GM13976 (cell line): ENCODE measurements at regions of chr7 and their contacts with region 1.

Region 1: GRCh38 chr7:28389504-28390395 is 22.6 kb upstream of the CREB5 start:
- DNase-seq: peak; percentile 21
- CTCF ChIP-seq: peak; percentile 19

Region 2: DNA sequence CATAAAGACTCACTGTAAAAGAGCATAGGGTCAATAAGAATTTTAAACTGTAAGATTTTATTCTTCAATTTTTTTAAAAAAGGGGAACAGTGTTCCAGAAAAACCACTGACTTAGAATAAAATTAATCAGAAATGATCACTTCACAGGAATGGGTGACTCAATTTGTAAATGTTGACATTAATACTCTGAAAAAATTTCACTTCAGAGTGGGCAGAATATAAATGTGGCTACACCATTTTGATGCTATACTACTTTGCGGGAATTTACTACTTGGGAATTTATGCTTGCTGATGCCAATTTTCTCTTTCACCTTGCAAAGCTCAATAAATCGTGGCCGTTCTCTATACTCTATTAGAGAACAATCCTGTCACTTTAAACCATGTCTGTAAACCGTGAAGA is 854.0 kb before region 1 on chr7:
- in situ Hi-C with region 1: no loop called
- DNase-seq: no peak
- CTCF ChIP-seq: no peak

Region 3: GRCh38 chr7:28626624-28627262 is 237.0 kb after region 1 on chr7:
- in situ Hi-C with region 1: loop called (anchors 10 kb)
- DNase-seq: peak; percentile 13
- CTCF ChIP-seq: peak; percentile 29

Region 4: DNA sequence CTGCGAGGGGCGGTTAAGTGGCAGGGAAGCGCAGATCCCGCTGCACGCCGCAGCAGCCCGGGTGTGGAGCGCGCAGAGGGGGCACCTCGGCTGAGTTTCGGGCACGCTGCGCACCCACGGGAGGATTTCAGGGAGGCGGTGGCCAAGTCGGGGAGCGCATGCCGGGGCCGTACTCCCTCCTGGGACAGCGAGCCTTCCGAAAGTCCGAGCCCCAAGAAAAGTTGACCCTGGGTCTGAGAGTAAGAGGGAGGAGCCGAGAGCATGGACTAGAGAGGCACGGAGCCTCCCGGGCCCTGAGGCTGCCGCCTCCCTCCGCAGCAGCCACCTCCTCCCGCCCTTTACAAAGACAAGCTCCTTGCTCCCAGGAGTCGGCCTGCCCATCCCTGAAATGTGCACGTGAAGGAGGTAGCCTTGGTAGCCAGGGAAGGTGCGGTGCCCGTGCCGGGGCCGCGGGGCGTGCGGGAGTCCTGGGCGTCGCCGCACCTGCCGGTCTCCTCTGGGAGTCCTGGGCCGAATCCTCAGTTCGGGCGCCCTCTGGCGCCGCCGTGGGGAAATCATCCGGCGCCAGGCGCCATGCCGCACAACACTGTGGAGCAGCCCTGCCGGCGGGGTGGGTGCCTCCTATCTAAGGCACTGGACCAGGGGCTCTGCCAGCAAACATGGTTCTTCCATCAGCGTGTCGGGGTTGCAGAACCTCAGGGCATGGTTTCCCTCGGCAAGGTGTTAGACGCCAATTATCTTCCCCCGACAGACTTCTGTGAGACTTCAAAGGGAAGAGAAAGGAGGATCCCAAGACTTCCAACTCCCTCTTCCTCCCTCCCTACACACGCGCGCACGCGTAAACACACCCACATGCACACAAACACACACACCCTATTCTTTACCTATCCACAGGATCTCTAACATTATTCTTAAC is 464.3 kb after region 1 on chr7:
- in situ Hi-C with region 1: loop called (anchors 10 kb)
- DNase-seq: peak; percentile 95
- CTCF ChIP-seq: peak; percentile 89

Region 5: DNA sequence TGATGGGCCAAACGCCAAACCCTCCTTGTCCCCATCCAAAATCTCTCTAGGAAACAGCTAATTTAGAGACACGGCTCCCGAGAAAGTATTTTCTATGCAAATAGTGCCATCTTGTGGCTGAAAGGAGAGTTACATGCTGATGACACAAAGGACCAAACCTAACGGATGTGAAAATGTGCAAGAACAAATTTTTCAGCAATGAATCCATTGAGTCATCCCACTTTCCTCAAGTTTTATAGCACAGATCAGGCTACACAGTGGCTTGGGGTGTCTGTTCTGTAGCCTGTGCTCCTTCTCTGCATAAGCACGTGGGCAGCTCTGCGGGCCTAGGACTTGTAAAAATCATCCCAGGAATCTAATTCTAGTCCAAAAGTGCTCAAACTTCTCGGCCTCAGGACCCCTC is 1019.1 kb after region 1 on chr7:
- in situ Hi-C with region 1: no loop called
- DNase-seq: peak; percentile 67
- CTCF ChIP-seq: peak; percentile 64

Region 6: DNA sequence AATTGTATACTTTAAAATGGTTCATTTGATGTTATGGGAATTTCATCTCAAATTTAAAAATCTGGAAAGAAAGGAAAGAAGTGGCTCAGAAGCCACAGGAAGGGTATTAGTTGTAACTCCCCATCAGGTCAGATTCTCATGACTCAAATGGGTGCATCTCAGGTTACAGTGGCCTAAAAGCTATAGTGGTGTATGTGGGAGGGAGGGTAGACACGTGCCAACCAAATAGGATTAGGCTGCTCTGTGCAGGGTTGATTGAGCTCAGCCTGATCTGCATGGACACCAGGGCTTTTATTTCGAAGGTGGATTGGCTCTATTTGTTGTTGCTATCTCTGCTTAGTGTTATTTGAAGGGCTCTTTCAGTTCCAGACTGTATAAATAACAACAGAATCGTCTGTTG is 1052.4 kb after region 1 on chr7:
- in situ Hi-C with region 1: no loop called
- DNase-seq: no peak
- CTCF ChIP-seq: no peak